ENCODE measurements at regions of chr2 and their contacts with region 1.

Region 1: GRCh38 chr2:4340536-4340935 is 637.2 kb downstream of the DCDC2C start:
- DNase-seq: no peak
- H3K4me3 ChIP-seq: no peak overlapping the region
- H3K27ac ChIP-seq: no peak overlapping the region
- H3K4me1 ChIP-seq: no peaks in the 10 kb centered on the region
- CTCF ChIP-seq: no peak

Region 2: DNA sequence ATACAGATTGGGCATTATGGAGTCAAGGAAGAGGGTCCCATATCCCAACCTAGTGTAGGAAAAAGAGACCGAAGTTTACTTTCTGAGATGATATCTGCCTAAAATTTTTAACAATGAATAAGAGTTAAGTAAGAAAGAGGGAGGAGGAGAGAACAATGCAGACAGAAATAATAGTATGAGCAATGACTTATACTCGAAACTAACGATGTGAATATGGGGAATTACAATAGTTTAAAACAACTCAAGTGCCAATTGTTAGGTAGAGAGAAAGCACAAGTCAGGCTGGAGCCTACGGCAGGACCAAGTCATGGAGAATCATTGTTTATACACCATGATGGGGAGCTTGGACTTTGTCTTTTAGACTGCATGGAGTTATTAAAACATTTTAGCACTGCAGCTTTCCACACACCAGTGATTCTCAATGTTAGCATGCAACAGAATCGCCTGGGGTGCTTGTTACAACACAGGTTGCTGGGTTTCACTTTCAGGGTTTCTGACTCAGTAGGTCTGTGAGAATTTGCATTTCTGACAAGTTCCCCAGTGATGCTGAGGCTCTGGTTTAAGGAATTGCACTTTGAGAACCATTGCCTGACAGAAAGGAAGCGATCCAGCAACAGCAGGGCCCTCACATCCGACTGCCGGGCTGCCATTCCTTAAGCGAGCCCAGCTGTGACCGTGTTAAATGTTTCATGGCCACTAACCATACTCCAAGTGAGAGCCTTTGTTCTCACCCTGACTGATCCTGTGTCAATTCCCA is 125.9 kb before region 1 on chr2:
- CTCF ChIA-PET with region 1: no interaction called
- POLR2A ChIA-PET with region 1: no interaction called
- intact Hi-C with region 1: loop called (anchors 10 kb)
- DNase-seq: no peak
- H3K4me3 ChIP-seq: no peak overlapping the region
- H3K27ac ChIP-seq: no peak overlapping the region
- H3K4me1 ChIP-seq: no peaks in the 10 kb centered on the region
- CTCF ChIP-seq: no peak